ENCODE measurements at regions of chr2 and their contacts with region 1.

Region 1: GRCh38 chr2:75290600-75291150 is 91.4 kb upstream of the TACR1 start:
- DNase-seq: no peak
- H3K4me3 ChIP-seq: no peak overlapping the region
- H3K27ac ChIP-seq: no peak overlapping the region
- H3K4me1 ChIP-seq: peaks cover 16% of the 10 kb centered on the region
- H3K27me3 ChIP-seq: no peaks in the 10 kb centered on the region
- CTCF ChIP-seq: peak; percentile 10 to 41

Region 2: DNA sequence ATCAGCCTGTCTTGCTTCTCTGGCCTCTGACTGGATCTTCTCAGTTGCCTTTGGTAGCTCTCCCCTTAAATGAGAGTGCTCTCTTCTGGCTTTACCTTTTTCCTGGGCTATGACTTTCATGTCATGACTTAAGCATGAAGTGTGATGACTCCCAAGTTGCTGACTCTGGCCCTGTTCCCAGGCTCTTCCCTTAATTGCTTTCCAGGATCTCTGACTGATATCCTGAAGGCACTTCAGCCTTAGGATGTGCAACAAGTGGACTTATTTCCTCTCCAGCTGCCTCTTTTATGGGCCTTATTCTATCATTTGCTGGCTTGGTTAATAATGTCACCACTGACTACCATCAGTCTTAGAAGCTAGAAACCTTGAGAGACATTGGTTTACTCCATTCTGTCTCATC is 619.2 kb before region 1 on chr2:
- CTCF ChIA-PET with region 1: no interaction called
- dilution Hi-C with region 1: no loop called
- in situ Hi-C with region 1: no loop called
- intact Hi-C with region 1: no loop called
- DNase-seq: peak; percentile 63
- H3K4me3 ChIP-seq: no peak overlapping the region
- H3K27ac ChIP-seq: no peak overlapping the region
- H3K4me1 ChIP-seq: peaks cover 4% of the 10 kb centered on the region
- H3K27me3 ChIP-seq: no peaks in the 10 kb centered on the region
- CTCF ChIP-seq: no peak

Region 3: DNA sequence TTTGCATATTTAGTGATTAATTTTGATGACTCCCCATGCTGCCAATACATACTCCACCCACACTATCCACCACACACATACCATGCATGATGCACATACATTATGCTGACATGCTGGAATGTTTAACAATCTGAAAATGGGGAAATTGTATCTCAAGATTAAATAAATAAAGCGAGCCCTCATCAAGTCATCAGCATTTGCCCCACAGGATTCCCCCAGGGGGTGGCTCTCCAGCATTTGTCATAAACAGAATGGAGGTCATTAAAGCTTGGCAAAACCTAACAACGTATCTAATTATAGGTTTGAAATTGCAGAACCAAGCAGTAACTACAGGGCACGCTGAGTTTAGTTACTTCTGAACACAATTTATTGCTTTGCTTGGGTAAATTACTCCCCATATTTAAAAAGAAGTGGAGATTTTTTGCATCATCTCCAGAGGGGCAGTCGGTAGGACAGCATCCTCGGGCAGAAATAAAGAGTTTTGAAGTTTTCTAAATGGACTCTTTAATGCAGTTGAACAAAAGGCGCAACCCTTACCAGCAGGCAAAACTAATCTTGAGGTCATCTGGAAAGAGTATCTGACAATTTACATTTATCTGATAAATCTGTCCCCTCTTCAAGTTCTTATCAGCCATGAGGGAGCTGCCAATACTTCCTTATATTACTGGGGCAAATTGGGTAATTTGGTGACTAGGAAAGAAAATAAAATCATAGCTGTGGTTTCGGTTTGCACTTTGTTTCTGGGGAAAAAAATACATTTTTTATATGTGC is 50.1 kb after region 1 on chr2:
- CTCF ChIA-PET with region 1: no interaction called
- dilution Hi-C with region 1: no loop called
- in situ Hi-C with region 1: no loop called
- intact Hi-C with region 1: no loop called
- DNase-seq: no peak
- H3K4me3 ChIP-seq: no peak overlapping the region
- H3K27ac ChIP-seq: no peak overlapping the region
- H3K4me1 ChIP-seq: no peaks in the 10 kb centered on the region
- H3K27me3 ChIP-seq: peaks cover 2% of the 10 kb centered on the region
- CTCF ChIP-seq: no peak

Region 4: GRCh38 chr2:75361486-75361885 is 70.8 kb after region 1 on chr2:
- CTCF ChIA-PET with region 1: no interaction called
- dilution Hi-C with region 1: loop called (anchors 10 kb)
- in situ Hi-C with region 1: no loop called
- intact Hi-C with region 1: no loop called
- DNase-seq: no peak
- H3K4me3 ChIP-seq: no peak overlapping the region
- H3K27ac ChIP-seq: no peak overlapping the region
- H3K4me1 ChIP-seq: no peaks in the 10 kb centered on the region
- H3K27me3 ChIP-seq: peaks cover 2% of the 10 kb centered on the region
- CTCF ChIP-seq: no peak